Activated CD4-positive, alpha-beta memory T cell treated with anti-CD3 and anti-CD28 coated beads for 36 hours (primary cell): ENCODE measurements at regions of chr16 and their contacts with region 1.

Region 1: DNA sequence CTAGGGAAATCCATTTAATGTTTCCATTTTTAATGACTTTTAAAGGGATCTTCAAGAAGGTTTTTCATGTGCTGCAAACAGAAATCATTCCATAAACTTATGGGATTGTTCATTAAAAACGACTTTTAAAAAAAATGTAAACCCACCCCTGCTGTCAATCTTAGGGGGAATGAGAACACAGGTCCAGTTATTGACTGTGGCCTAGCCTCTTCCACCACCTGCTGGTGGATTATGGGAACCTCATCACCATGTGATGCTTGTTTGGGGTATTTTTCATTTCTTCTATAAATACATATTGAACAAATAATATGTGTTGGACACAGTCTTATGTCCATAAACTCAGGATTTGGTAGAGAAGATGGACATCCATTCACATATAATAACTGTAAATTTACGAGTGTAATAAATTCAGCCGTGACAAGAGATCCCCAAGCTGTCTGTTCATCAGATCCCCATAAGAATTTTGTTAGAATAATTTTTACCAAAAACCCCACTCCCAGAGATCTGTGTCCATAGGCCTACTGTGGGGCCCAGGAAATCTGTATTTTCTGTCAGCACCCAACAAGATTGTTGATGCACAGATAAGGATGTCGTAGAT is 42.0 kb upstream of the TMC5 start:
- DNase-seq: peak; percentile 47
- H3K4me3 Mint-ChIP-seq: no peak overlapping the region
- H3K27ac Mint-ChIP-seq: no peak overlapping the region
- H3K4me1 Mint-ChIP-seq: peaks cover 8% of the 10 kb centered on the region
- H3K27me3 Mint-ChIP-seq: no peaks in the 10 kb centered on the region

Region 2: GRCh38 chr16:19167710-19168370 is 207.8 kb before region 1 on chr16 and contains the start of gene SYT17:
- CTCF ChIA-PET with region 1: no interaction called
- POLR2A ChIA-PET with region 1: no interaction called
- intact Hi-C with region 1: loop called (anchors 1 kb)
- DNase-seq: peak; percentile 65
- H3K4me3 Mint-ChIP-seq: no peak within 1 kb of the TSS
- H3K27ac Mint-ChIP-seq: no peak within 1 kb of the TSS
- H3K4me1 Mint-ChIP-seq: no peaks in the 10 kb centered on the region
- H3K27me3 Mint-ChIP-seq: peaks cover 24% of the 10 kb centered on the region
- total RNA-seq, gene SYT17: 0.10 TPM in 1 of 2 experiments, not detected in the other

Region 3: GRCh38 chr16:19213890-19214289 is 161.8 kb before region 1 on chr16:
- CTCF ChIA-PET with region 1: no interaction called
- POLR2A ChIA-PET with region 1: no interaction called
- intact Hi-C with region 1: loop called (anchors 2 kb)
- DNase-seq: peak; percentile 24
- H3K4me3 Mint-ChIP-seq: no peak overlapping the region
- H3K27ac Mint-ChIP-seq: no peak overlapping the region
- H3K4me1 Mint-ChIP-seq: no peaks in the 10 kb centered on the region
- H3K27me3 Mint-ChIP-seq: peaks cover 1% of the 10 kb centered on the region

Region 4: DNA sequence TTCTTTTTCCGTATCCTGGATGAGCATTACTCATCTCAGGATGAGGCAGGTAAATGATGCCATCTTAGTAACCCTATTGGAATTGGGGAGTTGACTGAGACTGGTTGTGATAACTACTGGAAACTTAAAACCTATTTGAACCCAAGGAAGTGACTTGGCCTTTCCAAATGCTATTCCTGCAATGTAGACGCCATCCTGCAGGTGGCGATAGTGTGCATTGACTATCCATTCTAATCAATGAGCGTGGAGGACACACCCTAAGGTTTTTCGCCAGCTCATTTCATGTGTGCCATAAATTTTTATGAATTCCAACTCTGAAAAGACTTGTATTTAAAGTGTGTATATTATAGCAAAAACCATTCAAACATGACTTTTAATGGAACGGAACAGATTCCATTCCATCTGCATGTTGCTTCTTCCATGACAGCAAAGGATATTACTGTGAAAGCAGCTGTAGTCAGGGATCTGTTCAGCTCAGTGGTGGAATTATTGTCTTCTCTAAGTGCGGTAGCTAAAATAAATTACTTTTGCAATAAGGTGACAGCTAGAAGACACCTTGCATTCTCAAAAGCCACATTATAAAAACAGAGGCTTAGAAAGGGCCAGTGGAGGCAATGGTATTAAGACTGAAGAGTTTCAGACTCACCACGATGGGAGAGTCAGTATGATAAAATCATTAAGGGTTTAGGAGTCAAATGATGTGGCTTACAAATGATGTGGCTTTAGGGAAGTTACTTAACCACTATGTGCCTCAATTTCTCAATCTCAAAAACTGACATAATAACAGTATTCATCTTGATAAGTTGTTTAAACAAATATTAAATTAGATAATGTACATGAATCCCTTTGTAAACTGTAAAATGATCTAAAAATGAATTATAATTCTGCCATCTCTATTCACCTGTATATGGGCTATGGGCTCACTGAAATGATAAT is 152.2 kb before region 1 on chr16:
- CTCF ChIA-PET with region 1: interaction called, 3 read pairs
- POLR2A ChIA-PET with region 1: no interaction called
- intact Hi-C with region 1: loop called (anchors 1 kb)
- DNase-seq: peak; percentile 66
- H3K4me3 Mint-ChIP-seq: no peak overlapping the region
- H3K27ac Mint-ChIP-seq: no peak overlapping the region
- H3K4me1 Mint-ChIP-seq: no peaks in the 10 kb centered on the region
- H3K27me3 Mint-ChIP-seq: peaks cover 5% of the 10 kb centered on the region

Region 5: DNA sequence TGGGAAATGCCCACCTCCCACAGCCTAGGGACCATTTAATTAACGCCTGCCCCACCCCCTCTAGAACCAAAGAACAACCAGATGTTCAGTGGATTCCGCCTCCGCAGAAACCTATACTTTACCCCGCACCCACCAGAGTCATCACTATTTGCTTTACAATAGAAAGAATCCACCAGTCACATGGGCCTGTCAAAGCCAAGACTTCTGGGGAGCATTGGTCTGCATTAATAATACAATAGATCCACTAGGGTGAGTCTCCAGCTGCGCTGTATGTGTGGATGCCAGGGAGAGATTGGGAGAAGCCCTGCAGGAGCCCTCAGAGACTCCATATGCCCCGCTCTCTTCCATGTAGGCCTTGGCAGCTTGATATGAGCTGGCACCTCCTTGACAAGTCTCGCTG is 58.8 kb before region 1 on chr16:
- CTCF ChIA-PET with region 1: no interaction called
- POLR2A ChIA-PET with region 1: no interaction called
- intact Hi-C with region 1: no loop called
- DNase-seq: no peak
- H3K4me3 Mint-ChIP-seq: no peak overlapping the region
- H3K27ac Mint-ChIP-seq: no peak overlapping the region
- H3K4me1 Mint-ChIP-seq: no peaks in the 10 kb centered on the region
- H3K27me3 Mint-ChIP-seq: no peaks in the 10 kb centered on the region

Region 6: DNA sequence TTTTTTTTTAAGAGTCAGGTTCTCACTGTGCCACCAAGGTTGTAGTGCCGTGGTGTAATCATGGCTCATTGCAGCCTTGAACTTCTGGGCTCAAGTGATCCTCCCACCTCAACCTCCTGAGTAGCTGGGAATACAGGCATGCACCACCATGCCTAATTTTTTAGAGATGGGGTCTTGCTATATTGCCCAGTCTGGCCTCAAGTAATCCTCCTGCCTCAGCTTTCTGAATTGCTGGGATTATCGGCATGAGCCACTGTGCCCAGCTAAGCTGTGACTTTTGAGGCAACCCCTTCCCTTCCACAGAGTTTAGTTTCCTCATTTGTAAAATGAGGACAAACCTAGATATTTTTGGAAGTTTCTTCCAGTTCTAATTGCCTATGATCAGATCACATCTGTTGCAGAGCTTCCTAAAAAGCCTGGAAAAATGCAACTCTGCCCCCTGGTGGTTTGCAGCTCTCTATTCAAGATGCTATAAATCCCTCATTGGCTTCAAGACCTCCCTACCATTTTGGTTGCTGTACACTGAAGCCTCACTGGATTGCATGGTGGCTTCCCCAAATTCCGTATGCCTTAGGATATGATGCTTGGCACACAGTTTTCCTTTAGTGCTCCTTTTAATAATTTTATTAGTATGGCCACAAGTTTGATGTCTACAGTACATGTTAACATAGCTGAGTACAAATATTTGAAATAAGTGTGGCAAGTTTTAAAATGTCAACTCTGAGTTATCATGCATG is 126.9 kb after region 1 on chr16:
- CTCF ChIA-PET with region 1: interaction called, 3 read pairs
- POLR2A ChIA-PET with region 1: no interaction called
- intact Hi-C with region 1: loop called (anchors 2 kb)
- DNase-seq: peak; percentile 76
- H3K4me3 Mint-ChIP-seq: no peak overlapping the region
- H3K27ac Mint-ChIP-seq: no peak overlapping the region
- H3K4me1 Mint-ChIP-seq: no peaks in the 10 kb centered on the region
- H3K27me3 Mint-ChIP-seq: no peaks in the 10 kb centered on the region